Naive thymus-derived CD4-positive, alpha-beta T cell (primary cell): ENCODE measurements at regions of chr21 and their contacts with region 1.

Region 1: DNA sequence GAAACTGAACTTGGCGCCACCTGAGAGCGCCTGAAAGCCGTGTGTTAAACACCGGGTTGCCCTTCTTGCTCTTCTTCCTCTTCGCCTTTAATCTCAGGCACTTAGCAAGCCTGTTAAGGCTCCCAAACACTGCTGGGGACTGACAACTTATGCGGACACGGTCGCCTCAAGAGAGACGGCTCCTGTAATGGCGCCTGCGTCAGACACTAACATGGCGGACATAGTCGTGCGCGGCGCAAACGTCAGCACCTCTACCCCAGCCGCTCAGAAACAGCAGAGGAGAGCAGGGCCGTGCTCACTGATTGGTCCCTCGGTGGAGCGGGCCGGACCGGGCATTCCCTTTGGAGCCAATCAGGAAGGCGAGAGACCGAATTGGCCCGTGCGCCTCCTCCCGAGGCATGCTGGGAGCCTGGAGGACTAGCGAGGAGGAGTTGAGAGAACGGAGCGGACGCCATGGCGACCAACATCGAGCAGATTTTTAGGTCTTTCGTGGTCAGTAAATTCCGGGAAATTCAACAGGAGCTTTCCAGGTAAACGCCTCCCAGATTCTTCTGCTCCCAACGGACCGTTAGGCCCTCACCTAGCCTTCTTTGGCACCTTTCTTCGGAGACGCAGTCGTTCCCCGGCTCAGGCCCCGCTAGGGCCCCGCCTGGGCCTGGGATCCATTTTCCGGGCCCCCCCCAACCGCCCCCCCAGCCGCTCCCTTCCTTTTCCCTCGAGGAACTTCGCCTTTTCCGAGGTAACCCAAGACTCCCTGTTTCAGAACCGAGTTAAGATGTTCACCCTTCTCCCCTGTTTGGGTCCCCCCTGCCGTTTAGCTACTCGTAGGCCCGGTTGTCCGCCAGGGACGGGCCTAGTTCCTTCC is at the start of gene SON:
- DNase-seq: peak; percentile 87 to 99 (median 98)
- ATAC-seq: peak; percentile 94
- H3K4me3 ChIP-seq: peak within 1 kb of the TSS; percentile 95
- H3K4me3 Mint-ChIP-seq: peak within 1 kb of the TSS; percentile 90 to 100 (median 97)
- H3K27ac ChIP-seq: peak within 1 kb of the TSS; percentile 99
- H3K27ac Mint-ChIP-seq: peak within 1 kb of the TSS; percentile 99 to 100 (median 99)
- H3K4me1 ChIP-seq: peaks cover 20 to 30% of the 10 kb centered on the region in 2 donors
- H3K4me1 Mint-ChIP-seq: peaks cover 29 to 54% (median 45%) of the 10 kb centered on the region in 7 donors
- H3K27me3 ChIP-seq: no peaks in the 10 kb centered on the region
- H3K27me3 Mint-ChIP-seq: peaks cover 0 to 5% (median 0%) of the 10 kb centered on the region in 5 donors
- total RNA-seq, gene SON: 337 to 497 (median 431) TPM

Region 2: DNA sequence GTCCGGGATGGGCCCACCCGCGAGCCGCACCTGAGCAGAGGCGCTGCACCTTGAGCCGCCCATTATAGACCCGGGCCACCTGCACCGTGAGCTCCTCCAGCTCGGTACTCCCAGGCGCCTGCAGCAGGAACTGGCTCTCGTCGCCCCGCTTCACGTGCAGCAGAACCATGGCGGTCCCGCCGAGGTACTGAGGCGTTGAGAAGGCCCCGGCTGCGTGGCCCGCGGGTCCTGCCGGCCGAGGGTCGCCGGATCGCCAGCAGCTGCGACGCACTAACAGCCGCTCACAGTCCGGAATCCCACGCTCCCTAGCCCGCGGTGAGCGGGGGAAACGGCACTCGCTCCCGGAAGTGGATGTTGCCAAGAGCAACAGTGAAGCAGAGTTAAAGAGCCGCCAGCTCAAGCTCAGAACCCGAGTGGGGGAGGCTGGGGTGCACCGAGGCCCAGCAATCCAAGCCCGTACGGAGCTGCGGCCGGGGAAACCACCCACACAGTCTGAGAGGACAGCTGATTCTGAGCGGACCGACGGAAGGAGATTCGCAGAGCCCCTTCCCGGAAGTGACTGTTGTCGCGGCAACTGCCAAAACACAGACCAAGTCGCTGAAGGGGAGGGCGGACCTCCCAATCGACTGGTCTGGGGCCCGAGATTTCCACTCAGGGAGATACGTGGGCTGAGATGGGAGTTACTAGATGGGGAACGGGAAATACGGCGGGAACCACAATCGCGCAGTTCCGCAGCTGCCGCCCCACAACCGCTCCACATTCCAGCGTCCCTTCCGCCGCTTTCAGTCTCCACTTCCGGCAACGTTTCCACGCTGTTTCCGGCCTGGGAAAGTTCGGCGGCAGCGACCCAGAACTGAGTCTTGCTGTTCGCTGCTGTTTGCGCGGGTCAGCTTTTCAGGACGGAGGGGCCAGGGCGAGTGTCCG is 930.5 kb before region 1 on chr21 and contains the start of gene CFAP298:
- CTCF ChIA-PET with region 1: no interaction called
- POLR2A ChIA-PET with region 1: no interaction called
- intact Hi-C with region 1: loop called (anchors 2 kb)
- DNase-seq: peak; percentile 78 to 93 (median 89)
- ATAC-seq: peak; percentile 97
- H3K4me3 ChIP-seq: peak within 1 kb of the TSS; percentile 100
- H3K4me3 Mint-ChIP-seq: peak within 1 kb of the TSS; percentile 95 to 98 (median 97)
- H3K27ac ChIP-seq: peak within 1 kb of the TSS; percentile 87
- H3K27ac Mint-ChIP-seq: peak within 1 kb of the TSS; percentile 90 to 98 (median 97)
- H3K4me1 ChIP-seq: peaks cover 12% of the 10 kb centered on the region in 2 donors
- H3K4me1 Mint-ChIP-seq: peaks cover 0 to 34% (median 12%) of the 10 kb centered on the region in 7 donors
- H3K27me3 ChIP-seq: no peaks in the 10 kb centered on the region
- H3K27me3 Mint-ChIP-seq: peaks cover 0 to 15% (median 0%) of the 10 kb centered on the region in 5 donors
- total RNA-seq, gene CFAP298: 16.8 to 34.5 (median 31.3) TPM

Region 3: DNA sequence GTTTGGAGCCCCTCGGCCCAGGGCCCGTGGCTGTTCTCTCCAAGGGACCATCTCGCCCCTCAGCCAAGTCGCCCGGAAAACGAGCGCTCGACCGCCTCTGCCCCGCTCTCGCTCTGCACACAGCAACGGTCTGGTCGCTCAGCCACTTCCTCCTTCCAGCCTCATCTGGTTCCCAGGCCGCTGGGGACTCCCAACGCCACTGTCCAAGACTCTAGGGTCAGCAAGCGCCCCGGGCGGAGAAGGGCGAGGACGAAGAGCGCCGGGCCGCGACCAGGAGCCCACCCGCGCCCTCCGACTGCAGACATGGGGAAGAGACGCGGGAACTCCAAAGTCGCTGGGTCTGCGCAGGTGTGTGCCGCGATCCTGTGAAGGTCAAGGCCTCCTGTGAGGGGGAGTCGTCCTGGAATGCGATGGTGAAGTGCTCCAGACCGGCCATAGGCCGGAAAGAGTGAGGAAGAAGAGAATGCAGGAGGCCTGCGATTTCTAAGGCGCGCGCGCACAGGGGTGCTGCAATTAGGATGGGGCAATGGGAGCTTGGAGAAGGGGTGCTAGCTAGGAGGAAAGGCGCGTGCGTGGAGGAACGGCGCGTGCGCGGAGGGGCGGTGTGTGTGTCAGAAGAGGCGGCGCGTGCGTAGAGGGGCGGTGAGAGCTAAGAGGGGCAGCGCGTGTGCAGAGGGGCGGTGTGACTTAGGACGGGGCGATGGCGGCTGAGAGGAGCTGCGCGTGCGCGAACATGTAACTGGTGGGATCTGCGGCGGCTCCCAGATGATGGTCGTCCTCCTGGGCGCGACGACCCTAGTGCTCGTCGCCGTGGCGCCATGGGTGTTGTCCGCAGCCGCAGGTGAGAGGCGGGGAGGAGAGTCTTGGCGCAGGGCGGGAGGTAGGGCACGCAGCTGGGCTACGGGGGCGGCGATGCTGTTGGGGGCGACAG is 218.3 kb before region 1 on chr21 and contains the start of gene IFNAR1:
- CTCF ChIA-PET with region 1: no interaction called
- POLR2A ChIA-PET with region 1: interaction called, 3 read pairs
- intact Hi-C with region 1: loop called (anchors 1 to 2 kb)
- DNase-seq: peak; percentile 94 to 100 (median 98)
- ATAC-seq: peak; percentile 94
- H3K4me3 ChIP-seq: peak within 1 kb of the TSS; percentile 87
- H3K4me3 Mint-ChIP-seq: no peak within 1 kb of the TSS
- H3K27ac ChIP-seq: peak within 1 kb of the TSS; percentile 94
- H3K27ac Mint-ChIP-seq: no peak within 1 kb of the TSS
- H3K4me1 ChIP-seq: peaks cover 21 to 23% of the 10 kb centered on the region in 2 donors
- H3K4me1 Mint-ChIP-seq: peaks cover 0 to 33% (median 26%) of the 10 kb centered on the region in 7 donors
- H3K27me3 ChIP-seq: no peaks in the 10 kb centered on the region
- H3K27me3 Mint-ChIP-seq: peaks cover 0 to 2% (median 0%) of the 10 kb centered on the region in 5 donors
- total RNA-seq, gene IFNAR1: 24.7 to 60.8 (median 40.0) TPM

Region 4: GRCh38 chr21:33479679-33480480 is 63.0 kb before region 1 on chr21 and contains the start of gene TMEM50B:
- CTCF ChIA-PET with region 1: interaction called, 4 read pairs
- POLR2A ChIA-PET with region 1: interaction called, 108 read pairs
- intact Hi-C with region 1: loop called (anchors 1 kb)
- DNase-seq: peak; percentile 85 to 96 (median 94)
- ATAC-seq: peak; percentile 95
- H3K4me3 ChIP-seq: peak within 1 kb of the TSS; percentile 70
- H3K4me3 Mint-ChIP-seq: peak within 1 kb of the TSS; percentile 87 to 96 (median 96)
- H3K27ac ChIP-seq: peak within 1 kb of the TSS; percentile 89
- H3K27ac Mint-ChIP-seq: peak within 1 kb of the TSS; percentile 90 to 99 (median 95)
- H3K4me1 ChIP-seq: peaks cover 0 to 5% of the 10 kb centered on the region in 2 donors
- H3K4me1 Mint-ChIP-seq: peaks cover 7 to 33% (median 21%) of the 10 kb centered on the region in 7 donors
- H3K27me3 ChIP-seq: no peaks in the 10 kb centered on the region
- H3K27me3 Mint-ChIP-seq: peaks cover 0 to 15% (median 0%) of the 10 kb centered on the region in 5 donors
- total RNA-seq, gene TMEM50B: 38.3 to 108 (median 61.7) TPM

Region 5: DNA sequence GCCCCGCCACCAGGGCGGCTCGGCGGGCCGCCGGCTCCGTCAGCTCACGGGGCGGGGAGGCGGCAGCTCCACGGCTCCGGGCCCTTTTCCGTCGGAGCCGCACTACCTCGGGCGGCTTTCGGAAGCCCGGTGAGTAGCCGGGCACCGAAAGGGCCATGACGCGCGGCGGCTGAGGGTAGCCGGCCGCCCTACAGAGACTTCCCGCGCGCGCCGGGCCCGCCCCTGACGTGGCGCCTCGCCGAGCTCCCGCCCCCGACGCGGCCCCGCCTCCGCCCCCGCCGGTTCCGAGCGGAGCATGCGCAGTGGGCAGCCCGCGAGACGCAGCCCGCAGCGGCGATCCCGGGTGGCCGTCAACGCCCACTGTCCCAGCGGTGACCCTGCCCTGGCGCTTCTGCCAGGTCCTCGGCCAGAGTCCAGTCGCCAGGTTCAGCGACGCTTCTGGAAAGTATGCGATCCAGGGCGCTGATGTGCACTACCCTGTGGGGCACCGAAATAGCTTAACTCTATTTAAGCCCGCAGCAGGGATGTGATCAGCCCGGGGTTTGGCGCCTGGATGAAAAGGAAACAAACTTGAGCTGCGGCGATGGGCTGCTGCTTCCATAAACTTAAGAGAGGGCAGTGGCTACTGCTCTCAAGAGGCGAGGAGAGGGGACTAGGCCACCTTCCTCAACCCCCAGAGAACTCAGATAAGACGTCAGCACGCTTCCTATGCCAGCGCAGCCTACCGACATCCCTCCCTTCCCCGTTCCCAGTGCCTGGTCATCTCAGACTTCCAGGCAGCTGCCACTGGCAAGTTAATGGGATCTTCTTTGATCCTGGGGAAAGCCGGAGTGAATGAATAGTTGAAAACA is 45.8 kb after region 1 on chr21 and contains the start of gene DONSON:
- CTCF ChIA-PET with region 1: interaction called, 5 read pairs
- POLR2A ChIA-PET with region 1: interaction called, 23 read pairs
- intact Hi-C with region 1: loop called (anchors 1 kb)
- DNase-seq: peak; percentile 76 to 97 (median 89)
- ATAC-seq: peak; percentile 98
- H3K4me3 ChIP-seq: peak within 1 kb of the TSS; percentile 63
- H3K4me3 Mint-ChIP-seq: peak within 1 kb of the TSS; percentile 90 to 96 (median 94)
- H3K27ac ChIP-seq: peak within 1 kb of the TSS; percentile 89
- H3K27ac Mint-ChIP-seq: peak within 1 kb of the TSS; percentile 34 to 96 (median 89)
- H3K4me1 ChIP-seq: peaks cover 5% of the 10 kb centered on the region in 2 donors
- H3K4me1 Mint-ChIP-seq: peaks cover 0 to 31% (median 20%) of the 10 kb centered on the region in 7 donors
- H3K27me3 ChIP-seq: no peaks in the 10 kb centered on the region
- H3K27me3 Mint-ChIP-seq: peaks cover 0 to 1% (median 0%) of the 10 kb centered on the region in 5 donors
- total RNA-seq, gene DONSON: 8.9 to 30.8 (median 10.7) TPM

Region 6: GRCh38 chr21:33894736-33895288 is 351.9 kb after region 1 on chr21:
- CTCF ChIA-PET with region 1: no interaction called
- POLR2A ChIA-PET with region 1: no interaction called
- intact Hi-C with region 1: loop called in 1 of 2 experiments (anchors 10 kb)
- DNase-seq: peak; percentile 23 to 74 (median 67)
- ATAC-seq: peak; percentile 97
- H3K4me3 ChIP-seq: peak overlapping the region; percentile 36
- H3K4me3 Mint-ChIP-seq: peak overlapping the region; percentile 64 to 90 (median 78)
- H3K27ac ChIP-seq: peak overlapping the region; percentile 23
- H3K27ac Mint-ChIP-seq: peak overlapping the region in 8 of 9 donors; percentile 33 to 90 (median 74)
- H3K4me1 ChIP-seq: no peaks in the 10 kb centered on the region
- H3K4me1 Mint-ChIP-seq: peaks cover 8 to 16% (median 15%) of the 10 kb centered on the region in 7 donors
- H3K27me3 ChIP-seq: no peaks in the 10 kb centered on the region
- H3K27me3 Mint-ChIP-seq: peaks cover 0 to 26% (median 0%) of the 10 kb centered on the region in 5 donors